ENCODE measurements at regions of chr9 and their contacts with region 1.

Region 1: GRCh38 chr9:26891726-26892125 is 876 bp downstream of the CAAP1 start:
- DNase-seq: no peak
- ATAC-seq: no peak
- H3K4me3 ChIP-seq: peak overlapping the region; percentile 93 to 95
- H3K4me3 Mint-ChIP-seq: peak overlapping the region; percentile 98 to 99 (median 99)
- H3K27ac ChIP-seq: peak overlapping the region; percentile 89
- H3K27ac Mint-ChIP-seq: peak overlapping the region; percentile 99
- H3K4me1 ChIP-seq: peaks cover 15 to 23% of the 10 kb centered on the region in 2 experiments
- H3K4me1 Mint-ChIP-seq: peaks cover 44 to 50% (median 46%) of the 10 kb centered on the region in 3 donors
- H3K27me3 ChIP-seq: no peaks in the 10 kb centered on the region
- H3K27me3 Mint-ChIP-seq: no peaks in the 10 kb centered on the region

Region 2: GRCh38 chr9:25920326-25920725 is 971.4 kb before region 1 on chr9:
- CTCF ChIA-PET with region 1: no interaction called
- POLR2A ChIA-PET with region 1: no interaction called
- DNase-seq: no peak
- ATAC-seq: no peak
- H3K4me3 ChIP-seq: no peak overlapping the region
- H3K4me3 Mint-ChIP-seq: no peak overlapping the region
- H3K27ac ChIP-seq: no peak overlapping the region
- H3K27ac Mint-ChIP-seq: no peak overlapping the region
- H3K4me1 ChIP-seq: no peaks in the 10 kb centered on the region
- H3K4me1 Mint-ChIP-seq: no peaks in the 10 kb centered on the region
- H3K27me3 ChIP-seq: no peaks in the 10 kb centered on the region
- H3K27me3 Mint-ChIP-seq: no peaks in the 10 kb centered on the region

Region 3: DNA sequence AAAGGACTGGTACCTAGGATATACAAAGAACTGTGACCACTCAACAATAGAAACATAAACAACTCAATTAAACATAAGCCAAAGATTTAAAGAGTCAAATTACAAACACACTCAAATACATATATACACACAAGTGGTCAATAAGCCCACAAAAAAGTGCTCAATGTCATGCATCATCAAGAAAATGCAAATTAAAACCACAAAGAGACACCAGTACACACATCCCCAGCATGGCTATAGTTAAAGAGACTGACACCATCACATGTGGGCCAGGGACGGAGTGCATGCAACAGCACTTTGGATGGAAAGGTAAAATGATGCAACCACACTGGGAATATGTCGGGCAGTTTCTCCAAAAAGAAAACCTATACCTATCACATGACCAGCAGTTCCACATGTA is 88.8 kb before region 1 on chr9:
- CTCF ChIA-PET with region 1: no interaction called
- POLR2A ChIA-PET with region 1: no interaction called
- DNase-seq: no peak
- ATAC-seq: no peak
- H3K4me3 ChIP-seq: no peak overlapping the region
- H3K4me3 Mint-ChIP-seq: no peak overlapping the region
- H3K27ac ChIP-seq: no peak overlapping the region
- H3K27ac Mint-ChIP-seq: no peak overlapping the region
- H3K4me1 ChIP-seq: no peaks in the 10 kb centered on the region
- H3K4me1 Mint-ChIP-seq: no peaks in the 10 kb centered on the region
- H3K27me3 ChIP-seq: no peaks in the 10 kb centered on the region
- H3K27me3 Mint-ChIP-seq: peaks cover 0 to 7% of the 10 kb centered on the region in 2 donors

Region 4: GRCh38 chr9:26833792-26834191 is 57.9 kb before region 1 on chr9:
- CTCF ChIA-PET with region 1: no interaction called
- POLR2A ChIA-PET with region 1: no interaction called
- DNase-seq: no peak
- ATAC-seq: no peak
- H3K4me3 ChIP-seq: no peak overlapping the region
- H3K4me3 Mint-ChIP-seq: no peak overlapping the region
- H3K27ac ChIP-seq: no peak overlapping the region
- H3K27ac Mint-ChIP-seq: no peak overlapping the region
- H3K4me1 ChIP-seq: no peaks in the 10 kb centered on the region
- H3K4me1 Mint-ChIP-seq: peaks cover 0 to 15% (median 0%) of the 10 kb centered on the region in 3 donors
- H3K27me3 ChIP-seq: no peaks in the 10 kb centered on the region
- H3K27me3 Mint-ChIP-seq: no peaks in the 10 kb centered on the region

Region 5: DNA sequence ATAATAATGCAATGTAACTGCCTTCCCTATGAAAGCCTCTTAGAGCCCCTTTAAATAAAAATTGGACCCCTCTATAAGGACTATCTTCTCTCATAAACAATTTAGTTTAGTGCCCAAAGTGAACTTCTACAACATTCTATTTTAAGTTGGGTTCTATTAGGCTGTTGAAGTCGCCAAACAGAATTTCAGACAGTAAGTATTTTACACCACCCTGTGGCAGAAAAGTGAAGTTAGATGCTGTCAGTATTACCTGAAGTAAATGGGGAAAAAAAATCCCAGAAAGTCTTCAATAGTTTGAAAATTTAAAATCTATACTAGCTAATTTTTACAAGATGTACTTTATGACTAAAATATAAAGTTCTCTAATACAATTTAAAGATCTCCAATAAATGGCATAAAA is 28.7 kb before region 1 on chr9:
- CTCF ChIA-PET with region 1: interaction called in 1 of 2 experiments, 10 read pairs
- POLR2A ChIA-PET with region 1: no interaction called
- DNase-seq: no peak
- ATAC-seq: no peak
- H3K4me3 ChIP-seq: no peak overlapping the region
- H3K4me3 Mint-ChIP-seq: no peak overlapping the region
- H3K27ac ChIP-seq: no peak overlapping the region
- H3K27ac Mint-ChIP-seq: no peak overlapping the region
- H3K4me1 ChIP-seq: no peaks in the 10 kb centered on the region
- H3K4me1 Mint-ChIP-seq: peaks cover 0 to 10% (median 1%) of the 10 kb centered on the region in 3 donors
- H3K27me3 ChIP-seq: no peaks in the 10 kb centered on the region
- H3K27me3 Mint-ChIP-seq: no peaks in the 10 kb centered on the region

Region 6: GRCh38 chr9:27033823-27034403 is 142.2 kb after region 1 on chr9:
- CTCF ChIA-PET with region 1: interaction called in 1 of 2 experiments, 10 read pairs
- POLR2A ChIA-PET with region 1: no interaction called
- DNase-seq: peak in 26 of 35 experiments; percentile 1 to 51 (median 20)
- ATAC-seq: no peak
- H3K4me3 ChIP-seq: no peak overlapping the region
- H3K4me3 Mint-ChIP-seq: no peak overlapping the region
- H3K27ac ChIP-seq: no peak overlapping the region
- H3K27ac Mint-ChIP-seq: no peak overlapping the region
- H3K4me1 ChIP-seq: no peaks in the 10 kb centered on the region
- H3K4me1 Mint-ChIP-seq: no peaks in the 10 kb centered on the region
- H3K27me3 ChIP-seq: no peaks in the 10 kb centered on the region
- H3K27me3 Mint-ChIP-seq: no peaks in the 10 kb centered on the region

Region 7: GRCh38 chr9:27573634-27574590 is 682.2 kb after region 1 on chr9:
- CTCF ChIA-PET with region 1: no interaction called
- POLR2A ChIA-PET with region 1: no interaction called
- DNase-seq: peak; percentile 79 to 100 (median 97)
- ATAC-seq: peak; percentile 82 to 87 (median 84)
- H3K4me3 ChIP-seq: peak overlapping the region; percentile 85 to 87
- H3K4me3 Mint-ChIP-seq: peak overlapping the region; percentile 90 to 96 (median 95)
- H3K27ac ChIP-seq: peak overlapping the region; percentile 95
- H3K27ac Mint-ChIP-seq: peak overlapping the region; percentile 99
- H3K4me1 ChIP-seq: peaks cover 7 to 13% of the 10 kb centered on the region in 2 experiments
- H3K4me1 Mint-ChIP-seq: peaks cover 33 to 44% (median 35%) of the 10 kb centered on the region in 3 donors
- H3K27me3 ChIP-seq: no peaks in the 10 kb centered on the region
- H3K27me3 Mint-ChIP-seq: no peaks in the 10 kb centered on the region